CD4-positive, alpha-beta memory T cell (primary cell): ENCODE measurements at regions of chr12 and their contacts with region 1.

Region 1: GRCh38 chr12:56468216-56469006 is at the start of gene SPRYD4:
- DNase-seq: peak; percentile 94 to 96 (median 95)
- H3K4me3 ChIP-seq: peak within 1 kb of the TSS; percentile 90 to 98
- H3K4me3 Mint-ChIP-seq: peak within 1 kb of the TSS; percentile 93 to 98 (median 96)
- H3K27ac ChIP-seq: peak within 1 kb of the TSS; percentile 73
- H3K27ac Mint-ChIP-seq: peak within 1 kb of the TSS; percentile 94 to 99 (median 98)
- H3K4me1 ChIP-seq: peaks cover 26% of the 10 kb centered on the region
- H3K4me1 Mint-ChIP-seq: peaks cover 14 to 44% (median 26%) of the 10 kb centered on the region in 4 donors
- H3K27me3 ChIP-seq: no peaks in the 10 kb centered on the region
- H3K27me3 Mint-ChIP-seq: no peaks in the 10 kb centered on the region
- total RNA-seq, gene SPRYD4: 6.5 to 6.9 TPM

Region 2: DNA sequence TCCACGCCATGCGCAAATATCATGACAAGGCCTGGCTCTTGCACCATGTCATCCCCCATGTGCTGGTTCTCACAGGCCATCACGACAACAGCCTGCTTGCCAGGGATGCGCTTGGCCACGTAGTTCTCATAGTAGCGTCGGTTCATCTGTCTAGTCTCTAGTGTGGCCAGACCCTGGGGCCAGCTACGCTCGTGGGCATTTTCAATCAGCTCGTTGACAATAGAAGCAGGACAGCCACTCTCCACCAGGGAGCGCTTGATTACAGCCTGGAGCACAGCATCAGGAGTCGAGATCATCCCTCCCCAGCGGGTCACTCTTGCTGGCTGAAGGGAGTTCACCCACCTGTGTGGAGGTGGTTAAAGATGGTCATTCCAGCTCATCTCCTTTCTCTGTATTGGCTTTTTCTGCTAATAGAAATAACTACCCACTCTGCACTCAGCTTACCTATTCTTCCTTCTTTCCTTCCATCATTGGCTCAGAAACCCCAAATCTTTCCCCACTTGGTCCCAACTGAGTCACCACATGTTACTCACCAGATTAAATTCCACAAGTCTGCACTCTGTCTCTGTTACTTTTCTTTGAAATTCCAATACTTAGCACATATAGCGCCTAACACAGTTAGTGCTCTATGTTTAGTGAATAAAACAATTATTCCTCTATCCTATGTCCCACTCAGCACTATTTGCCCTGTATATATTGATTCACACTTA is 261.8 kb before region 1 on chr12:
- CTCF ChIA-PET with region 1: interaction called, 13 read pairs
- POLR2A ChIA-PET with region 1: interaction called, 3 read pairs
- intact Hi-C with region 1: loop called (anchors 1 kb)
- DNase-seq: peak in 4 of 5 donors; percentile 22 to 48 (median 24)
- H3K4me3 ChIP-seq: no peak overlapping the region
- H3K4me3 Mint-ChIP-seq: no peak overlapping the region
- H3K27ac ChIP-seq: no peak overlapping the region
- H3K27ac Mint-ChIP-seq: peak overlapping the region in 3 of 7 donors; percentile 33 to 55 (median 37)
- H3K4me1 ChIP-seq: no peaks in the 10 kb centered on the region
- H3K4me1 Mint-ChIP-seq: peaks cover 0 to 4% (median 2%) of the 10 kb centered on the region in 4 donors
- H3K27me3 ChIP-seq: no peaks in the 10 kb centered on the region
- H3K27me3 Mint-ChIP-seq: no peaks in the 10 kb centered on the region

Region 3: GRCh38 chr12:56266693-56267442 is 201.5 kb before region 1 on chr12 and contains the start of gene COQ10A:
- CTCF ChIA-PET with region 1: interaction called, 26 read pairs
- POLR2A ChIA-PET with region 1: interaction called, 20 read pairs
- intact Hi-C with region 1: loop called (anchors 1 kb)
- DNase-seq: peak; percentile 89 to 96 (median 91)
- H3K4me3 ChIP-seq: peak within 1 kb of the TSS; percentile 27 to 90
- H3K4me3 Mint-ChIP-seq: peak within 1 kb of the TSS; percentile 89 to 99 (median 96)
- H3K27ac ChIP-seq: peak within 1 kb of the TSS; percentile 84
- H3K27ac Mint-ChIP-seq: peak within 1 kb of the TSS; percentile 90 to 99 (median 97)
- H3K4me1 ChIP-seq: peaks cover 14% of the 10 kb centered on the region
- H3K4me1 Mint-ChIP-seq: peaks cover 10 to 23% (median 16%) of the 10 kb centered on the region in 4 donors
- H3K27me3 ChIP-seq: no peaks in the 10 kb centered on the region
- H3K27me3 Mint-ChIP-seq: no peaks in the 10 kb centered on the region
- total RNA-seq, gene COQ10A: 35.3 to 38.6 TPM

Region 4: GRCh38 chr12:56315622-56316473 is 152.6 kb before region 1 on chr12 and contains the start of gene CNPY2:
- CTCF ChIA-PET with region 1: interaction called, 37 read pairs
- POLR2A ChIA-PET with region 1: interaction called, 17 read pairs
- intact Hi-C with region 1: loop called (anchors 1 kb)
- DNase-seq: peak; percentile 93 to 97 (median 95)
- H3K4me3 ChIP-seq: peak within 1 kb of the TSS; percentile 99 to 100
- H3K4me3 Mint-ChIP-seq: peak within 1 kb of the TSS; percentile 97 to 100 (median 98)
- H3K27ac ChIP-seq: peak within 1 kb of the TSS; percentile 95
- H3K27ac Mint-ChIP-seq: peak within 1 kb of the TSS; percentile 98 to 100 (median 99)
- H3K4me1 ChIP-seq: peaks cover 18% of the 10 kb centered on the region
- H3K4me1 Mint-ChIP-seq: peaks cover 1 to 25% (median 13%) of the 10 kb centered on the region in 4 donors
- H3K27me3 ChIP-seq: no peaks in the 10 kb centered on the region
- H3K27me3 Mint-ChIP-seq: no peaks in the 10 kb centered on the region
- total RNA-seq, gene CNPY2: 93.5 to 95.8 TPM

Region 5: DNA sequence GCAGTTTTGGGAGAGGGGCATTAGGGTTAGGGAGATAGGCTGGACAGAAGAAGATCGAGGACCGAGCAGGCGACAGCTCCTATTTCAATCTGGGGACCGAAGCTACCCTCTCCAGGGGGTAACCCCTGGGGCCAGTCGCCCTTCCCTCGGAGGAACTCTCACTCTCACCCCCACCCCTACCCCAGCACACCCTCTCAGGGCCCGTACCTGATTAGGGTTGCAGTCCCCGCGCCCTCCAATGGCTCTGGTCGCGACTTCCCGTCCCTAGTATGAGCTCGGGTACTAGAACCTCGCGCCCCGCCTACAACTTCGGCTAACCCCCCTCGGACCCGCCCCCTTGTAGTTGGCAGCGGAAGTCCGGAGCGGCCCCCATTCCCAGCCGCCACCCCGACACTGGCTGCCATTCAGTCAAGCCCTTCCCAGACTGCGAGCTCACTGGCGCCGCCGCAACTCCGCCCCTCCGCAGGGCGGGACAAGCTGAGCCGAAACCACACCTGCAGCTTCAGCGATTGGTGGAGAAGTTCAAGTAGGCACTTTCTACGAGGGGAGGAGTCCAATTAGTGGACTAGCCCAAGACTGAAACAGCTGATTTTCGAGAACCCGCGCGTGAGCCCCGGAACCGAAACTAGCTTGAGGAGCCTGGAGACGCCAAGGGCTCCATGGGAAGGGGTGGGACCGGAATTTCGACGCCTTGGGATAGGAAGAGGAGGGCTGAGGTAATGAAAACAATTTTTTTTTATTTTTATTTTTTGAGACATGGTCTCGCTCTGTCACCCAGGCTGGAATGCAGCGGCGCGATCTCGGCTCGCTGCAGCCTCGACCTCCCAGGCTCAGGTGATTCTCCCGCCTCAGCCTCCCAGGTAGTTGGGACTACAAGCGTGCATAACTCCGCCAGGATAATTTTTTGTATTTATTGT is 108.3 kb before region 1 on chr12 and contains the start of gene STAT2:
- CTCF ChIA-PET with region 1: interaction called, 34 read pairs
- POLR2A ChIA-PET with region 1: interaction called, 24 read pairs
- intact Hi-C with region 1: loop called (anchors 1 kb)
- DNase-seq: peak; percentile 99 to 100 (median 100)
- H3K4me3 ChIP-seq: peak within 1 kb of the TSS; percentile 78 to 97
- H3K4me3 Mint-ChIP-seq: peak within 1 kb of the TSS; percentile 92 to 98 (median 96)
- H3K27ac ChIP-seq: peak within 1 kb of the TSS; percentile 84
- H3K27ac Mint-ChIP-seq: peak within 1 kb of the TSS; percentile 89 to 98 (median 96)
- H3K4me1 ChIP-seq: peaks cover 29% of the 10 kb centered on the region
- H3K4me1 Mint-ChIP-seq: peaks cover 16 to 30% (median 21%) of the 10 kb centered on the region in 4 donors
- H3K27me3 ChIP-seq: no peaks in the 10 kb centered on the region
- H3K27me3 Mint-ChIP-seq: no peaks in the 10 kb centered on the region
- total RNA-seq, gene STAT2: 192 to 193 TPM

Region 6: GRCh38 chr12:56454557-56454956 is 13.9 kb before region 1 on chr12 and contains the start of gene MIP:
- CTCF ChIA-PET with region 1: interaction called, 34 read pairs
- POLR2A ChIA-PET with region 1: interaction called, 18 read pairs
- intact Hi-C with region 1: loop called (anchors 1 kb)
- DNase-seq: no peak
- H3K4me3 ChIP-seq: no peak within 1 kb of the TSS
- H3K4me3 Mint-ChIP-seq: no peak within 1 kb of the TSS
- H3K27ac ChIP-seq: no peak within 1 kb of the TSS
- H3K27ac Mint-ChIP-seq: peak within 1 kb of the TSS in 1 of 7 donors; percentile 72
- H3K4me1 ChIP-seq: peaks cover 4% of the 10 kb centered on the region
- H3K4me1 Mint-ChIP-seq: peaks cover 4 to 10% (median 4%) of the 10 kb centered on the region in 4 donors
- H3K27me3 ChIP-seq: no peaks in the 10 kb centered on the region
- H3K27me3 Mint-ChIP-seq: no peaks in the 10 kb centered on the region
- total RNA-seq, gene MIP: not detected